ENCODE measurements at regions of chr2 and their contacts with region 1.

Region 1: GRCh38 chr2:130873700-130874346 is 37.1 kb downstream of the ARHGEF4 start:
- DNase-seq: peak; percentile 82 to 86
- H3K4me3 ChIP-seq: no peak overlapping the region
- H3K27ac ChIP-seq: no peak overlapping the region
- H3K4me1 ChIP-seq: no peaks in the 10 kb centered on the region
- H3K27me3 ChIP-seq: no peaks in the 10 kb centered on the region
- CTCF ChIP-seq: peak; percentile 24 to 82 (median 68)
- POLR2A ChIP-seq: no peak

Region 2: GRCh38 chr2:130797493-130798435 is 76.1 kb before region 1 on chr2:
- intact Hi-C with region 1: loop called (anchors 2 kb)
- DNase-seq: peak; percentile 93 to 94
- H3K4me3 ChIP-seq: peak overlapping the region; percentile 29 to 69 (median 65)
- H3K27ac ChIP-seq: peak overlapping the region; percentile 87 to 96 (median 93)
- H3K4me1 ChIP-seq: peaks cover 6 to 17% of the 10 kb centered on the region in 2 donors
- H3K27me3 ChIP-seq: no peaks in the 10 kb centered on the region
- CTCF ChIP-seq: peak; percentile 68 to 99 (median 84)
- POLR2A ChIP-seq: peak in 1 of 2 donors; percentile 63

Region 3: DNA sequence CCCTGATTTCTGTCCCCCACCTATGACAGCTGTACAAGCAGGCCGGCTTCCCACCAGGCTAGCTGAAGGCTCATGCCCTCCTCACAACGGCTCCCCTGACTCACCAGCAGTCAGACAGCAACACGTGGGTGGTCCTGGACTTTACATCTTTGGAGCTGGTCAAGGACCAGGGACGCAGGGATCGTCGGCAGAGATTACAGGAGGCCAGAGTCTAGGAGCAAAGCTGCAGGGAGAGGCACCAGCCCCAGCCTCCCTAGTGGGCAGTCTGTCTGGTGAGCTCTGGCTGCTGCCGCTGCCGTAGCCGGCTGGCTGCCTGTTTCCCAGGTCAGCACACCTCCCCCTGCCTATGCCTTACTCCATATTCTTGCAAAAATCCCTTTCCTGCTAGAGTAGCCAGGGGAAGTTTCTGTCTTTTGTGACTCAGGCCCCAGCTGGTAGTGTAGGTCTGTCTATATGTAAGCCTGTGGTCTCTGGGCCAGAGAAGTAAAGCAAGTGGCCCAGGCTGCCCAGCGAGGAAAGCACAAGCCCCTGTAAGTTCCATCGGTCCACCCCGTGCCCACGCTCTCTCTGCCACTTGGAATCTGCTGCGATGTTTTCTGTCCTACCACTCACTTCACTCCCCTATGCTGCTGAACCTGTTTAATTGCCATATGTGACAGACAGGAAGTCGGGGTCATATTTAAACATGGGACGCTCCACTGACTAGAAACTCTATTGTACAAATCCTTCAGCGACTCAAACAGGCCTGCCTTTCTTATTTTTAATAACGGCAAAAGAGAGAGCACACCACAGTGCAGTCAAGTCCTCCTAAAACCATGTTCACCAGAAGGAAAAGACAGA is 39.5 kb before region 1 on chr2:
- intact Hi-C with region 1: loop called (anchors 5 kb)
- DNase-seq: no peak
- H3K4me3 ChIP-seq: no peak overlapping the region
- H3K27ac ChIP-seq: no peak overlapping the region
- H3K4me1 ChIP-seq: peaks cover 18 to 24% of the 10 kb centered on the region in 2 donors
- H3K27me3 ChIP-seq: no peaks in the 10 kb centered on the region
- CTCF ChIP-seq: no peak
- POLR2A ChIP-seq: no peak

Region 4: GRCh38 chr2:130957915-130958314 is 84.1 kb after region 1 on chr2:
- intact Hi-C with region 1: no loop called
- DNase-seq: no peak
- H3K4me3 ChIP-seq: no peak overlapping the region
- H3K27ac ChIP-seq: no peak overlapping the region
- H3K4me1 ChIP-seq: no peaks in the 10 kb centered on the region
- H3K27me3 ChIP-seq: no peaks in the 10 kb centered on the region
- CTCF ChIP-seq: no peak
- POLR2A ChIP-seq: no peak